Activated CD4-positive, alpha-beta memory T cell treated with anti-CD3 and anti-CD28 coated beads for 36 hours (primary cell): ENCODE measurements at regions of chr11 and their contacts with region 1.

Region 1: GRCh38 chr11:456533-456932 is 6.5 kb downstream of the PTDSS2 start:
- DNase-seq: peak; percentile 67
- H3K4me3 Mint-ChIP-seq: no peak overlapping the region
- H3K27ac Mint-ChIP-seq: peak overlapping the region; percentile 75
- H3K4me1 Mint-ChIP-seq: peaks cover 29% of the 10 kb centered on the region
- H3K27me3 Mint-ChIP-seq: no peaks in the 10 kb centered on the region

Region 2: GRCh38 chr11:518463-519250 is 62.1 kb after region 1 on chr11:
- CTCF ChIA-PET with region 1: interaction called, 10 read pairs
- POLR2A ChIA-PET with region 1: no interaction called
- intact Hi-C with region 1: no loop called
- DNase-seq: peak; percentile 93
- H3K4me3 Mint-ChIP-seq: peak overlapping the region; percentile 78
- H3K27ac Mint-ChIP-seq: peak overlapping the region; percentile 44
- H3K4me1 Mint-ChIP-seq: peaks cover 8% of the 10 kb centered on the region
- H3K27me3 Mint-ChIP-seq: no peaks in the 10 kb centered on the region